PC-9 (cell line): ENCODE measurements at regions of chr5 and their contacts with region 1.

Region 1: GRCh38 chr5:143244000-143244736 is 159.3 kb downstream of the NR3C1 start:
- DNase-seq: peak; percentile 84 to 97
- H3K4me3 ChIP-seq: peak overlapping the region; percentile 43; the same call in 1 of the 2 replicates
- H3K27ac ChIP-seq: peak overlapping the region; percentile 91
- H3K4me1 ChIP-seq: peaks cover 68% of the 10 kb centered on the region
- H3K27me3 ChIP-seq: no peaks in the 10 kb centered on the region
- CTCF ChIP-seq: no peak

Region 2: DNA sequence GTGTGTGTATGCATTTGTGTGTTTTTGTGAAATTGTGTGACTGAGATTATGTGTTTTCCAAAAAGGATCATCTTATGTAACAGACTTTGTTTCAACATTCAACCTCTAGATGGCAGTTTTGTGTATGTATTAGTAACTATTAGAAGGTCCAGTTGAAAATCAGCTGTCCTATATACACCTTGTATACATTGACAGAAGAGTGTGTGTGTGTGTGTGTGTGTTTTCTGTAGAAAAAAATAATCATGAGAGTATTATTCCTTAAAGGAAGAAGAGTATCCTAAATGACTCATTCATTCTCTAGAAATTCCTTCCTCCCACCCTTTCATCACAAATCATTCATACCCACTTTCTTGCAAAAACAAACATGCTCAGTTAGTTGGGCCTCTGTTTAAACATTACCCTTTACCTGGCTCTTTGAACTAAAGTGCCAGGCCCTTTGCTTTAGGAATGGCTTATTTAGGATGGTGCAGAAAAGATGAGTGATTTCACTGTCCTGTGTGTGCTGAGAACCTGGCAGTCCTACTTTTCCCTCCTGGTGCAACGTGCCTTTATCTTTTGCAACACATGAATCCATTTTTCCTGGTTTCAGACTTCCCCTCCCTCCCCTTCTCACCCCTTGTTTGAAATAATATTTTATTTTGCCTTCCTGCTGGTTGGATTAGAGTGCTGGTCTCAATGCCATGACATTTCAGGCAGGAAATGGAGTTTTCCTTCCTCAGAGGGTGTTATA is 321.8 kb before region 1 on chr5:
- CTCF ChIA-PET with region 1: no interaction called
- POLR2A ChIA-PET with region 1: no interaction called
- intact Hi-C with region 1: loop called (anchors 1 kb)
- DNase-seq: peak in 1 of 2 experiments; percentile 67
- H3K4me3 ChIP-seq: no peak overlapping the region
- H3K27ac ChIP-seq: no peak overlapping the region
- H3K4me1 ChIP-seq: peaks cover 11% of the 10 kb centered on the region
- H3K27me3 ChIP-seq: no peaks in the 10 kb centered on the region
- CTCF ChIP-seq: peak; percentile 70

Region 3: GRCh38 chr5:143106174-143106573 is 138.0 kb before region 1 on chr5:
- CTCF ChIA-PET with region 1: no interaction called
- POLR2A ChIA-PET with region 1: no interaction called
- intact Hi-C with region 1: loop called (anchors 2 kb)
- DNase-seq: peak; percentile 20 to 40
- H3K4me3 ChIP-seq: no peak overlapping the region
- H3K27ac ChIP-seq: no peak overlapping the region
- H3K4me1 ChIP-seq: peaks cover 22% of the 10 kb centered on the region
- H3K27me3 ChIP-seq: no peaks in the 10 kb centered on the region
- CTCF ChIP-seq: 0 out of 2 replicates have a peak, but pooled peaks have one; percentile 20

Region 4: DNA sequence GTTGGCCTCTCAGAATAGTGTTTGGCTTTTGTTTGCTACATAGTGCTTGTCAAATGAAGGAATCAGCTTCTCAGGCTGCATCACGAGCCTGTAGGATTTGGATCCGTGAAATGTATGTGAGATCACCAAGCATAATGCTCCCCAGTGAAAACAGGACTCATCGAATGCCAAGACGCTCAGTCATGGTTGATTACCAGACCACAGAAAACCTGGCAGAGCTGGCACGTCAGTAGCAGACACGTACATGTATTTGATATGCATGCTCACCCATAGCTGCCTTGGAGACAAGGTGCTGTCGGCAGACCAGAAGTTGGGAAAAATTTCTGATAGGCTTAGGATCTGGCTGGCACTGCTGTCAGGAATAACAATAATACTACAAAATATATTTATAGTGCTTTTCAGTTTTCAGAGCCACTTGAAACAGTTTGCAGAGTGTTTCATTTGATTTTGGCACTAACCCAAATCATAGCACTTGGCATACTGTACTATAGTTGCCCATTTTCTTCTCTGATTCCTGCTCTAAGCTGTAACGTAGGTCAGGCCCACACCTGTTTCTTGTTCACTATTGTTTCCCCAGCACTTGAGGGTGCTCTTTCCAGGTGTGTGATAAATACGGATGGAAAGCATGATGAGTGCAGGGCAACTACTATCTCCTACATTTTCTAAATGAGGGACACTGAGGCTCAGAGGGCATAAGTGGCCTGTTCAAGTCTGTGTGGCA is 66.7 kb before region 1 on chr5:
- CTCF ChIA-PET with region 1: no interaction called
- POLR2A ChIA-PET with region 1: no interaction called
- intact Hi-C with region 1: loop called (anchors 1 kb)
- DNase-seq: peak in 1 of 2 experiments; percentile 72
- H3K4me3 ChIP-seq: no peak overlapping the region
- H3K27ac ChIP-seq: no peak overlapping the region
- H3K4me1 ChIP-seq: no peaks in the 10 kb centered on the region
- H3K27me3 ChIP-seq: no peaks in the 10 kb centered on the region
- CTCF ChIP-seq: no peak

Region 5: GRCh38 chr5:143262393-143263174 is 18.4 kb after region 1 on chr5:
- CTCF ChIA-PET with region 1: no interaction called
- POLR2A ChIA-PET with region 1: no interaction called
- intact Hi-C with region 1: no loop called
- DNase-seq: peak in 1 of 2 experiments; percentile 45
- H3K4me3 ChIP-seq: no peak overlapping the region
- H3K27ac ChIP-seq: peak overlapping the region; percentile 55
- H3K4me1 ChIP-seq: 0 out of 2 replicates have a peak, but pooled peaks cover 4% of the 10 kb centered on the region
- H3K27me3 ChIP-seq: no peaks in the 10 kb centered on the region
- CTCF ChIP-seq: no peak

Region 6: DNA sequence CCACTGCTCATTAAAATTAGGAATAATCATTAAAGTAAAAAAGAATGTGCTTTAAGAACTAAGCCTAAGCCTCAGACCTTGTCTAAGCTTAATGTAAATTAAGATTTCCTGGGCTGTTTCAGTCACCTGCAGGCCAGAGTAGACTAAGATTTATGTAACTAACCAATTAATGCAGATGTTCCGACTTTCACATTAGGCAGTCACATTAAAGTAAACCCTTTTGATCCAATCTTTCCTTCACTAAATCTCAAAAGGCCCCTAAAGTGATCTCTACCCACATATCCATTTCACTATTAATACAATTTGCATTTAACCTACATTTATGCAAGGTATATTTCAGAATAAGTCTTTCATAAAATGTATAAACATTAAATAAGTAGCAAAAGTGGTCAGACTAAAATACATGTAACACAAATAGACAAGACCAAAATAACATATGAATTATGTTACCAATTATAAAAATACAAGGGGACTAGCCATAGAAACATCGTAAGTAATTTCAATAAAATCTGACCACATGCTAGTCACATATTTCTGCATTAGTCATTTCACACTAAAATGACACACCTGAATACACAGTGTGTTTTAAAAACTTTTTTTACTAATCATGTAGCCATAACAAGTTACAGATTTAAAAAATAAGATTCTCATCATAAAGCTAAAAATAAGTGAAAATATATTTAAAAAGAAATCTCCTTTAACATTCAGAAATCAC is 151.6 kb after region 1 on chr5:
- CTCF ChIA-PET with region 1: no interaction called
- POLR2A ChIA-PET with region 1: interaction called, 3 read pairs
- intact Hi-C with region 1: loop called (anchors 1 kb)
- DNase-seq: peak in 1 of 2 experiments; percentile 44
- H3K4me3 ChIP-seq: peak overlapping the region; percentile 28; the same call in 1 of the 2 replicates
- H3K27ac ChIP-seq: peak overlapping the region; percentile 50
- H3K4me1 ChIP-seq: peaks cover 64% of the 10 kb centered on the region
- H3K27me3 ChIP-seq: no peaks in the 10 kb centered on the region
- CTCF ChIP-seq: no peak

Region 7: GRCh38 chr5:143657647-143658285 is 413.6 kb after region 1 on chr5:
- CTCF ChIA-PET with region 1: no interaction called
- POLR2A ChIA-PET with region 1: no interaction called
- intact Hi-C with region 1: loop called (anchors 10 kb)
- DNase-seq: peak; percentile 34 to 89
- H3K4me3 ChIP-seq: no peak overlapping the region
- H3K27ac ChIP-seq: no peak overlapping the region
- H3K4me1 ChIP-seq: peaks cover 63% of the 10 kb centered on the region
- H3K27me3 ChIP-seq: no peaks in the 10 kb centered on the region
- CTCF ChIP-seq: no peak